ENCODE measurements at regions of chr7 and their contacts with region 1.

Region 1: GRCh38 chr7:32670110-32671025 is 175.1 kb downstream of the AVL9 start:
- DNase-seq: peak; percentile 82
- H3K4me3 Mint-ChIP-seq: peak overlapping the region; percentile 52
- H3K27ac Mint-ChIP-seq: peak overlapping the region; percentile 99
- H3K4me1 Mint-ChIP-seq: peaks cover 74% of the 10 kb centered on the region
- H3K27me3 Mint-ChIP-seq: no peaks in the 10 kb centered on the region
- CTCF ChIP-seq: no peak

Region 2: DNA sequence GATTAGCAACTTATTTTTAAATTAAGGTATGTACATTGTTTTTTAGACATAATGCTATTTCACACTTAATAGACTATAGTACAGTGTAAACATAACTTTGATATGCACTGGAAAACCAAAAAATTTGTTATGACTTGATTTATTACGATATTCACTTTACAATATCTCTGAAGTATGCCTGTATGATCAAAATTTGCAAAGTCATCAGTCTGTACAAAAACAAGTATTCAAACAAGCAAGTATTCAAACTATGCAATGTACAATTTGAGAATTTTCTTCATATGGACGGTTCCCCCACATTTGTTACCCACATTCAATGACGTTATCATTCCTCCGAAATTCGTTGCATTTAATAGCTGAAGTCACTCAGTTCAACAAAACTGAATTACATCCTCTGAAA is 27.2 kb before region 1 on chr7:
- CTCF ChIA-PET with region 1: no interaction called
- intact Hi-C with region 1: no loop called
- DNase-seq: no peak
- H3K4me3 Mint-ChIP-seq: no peak overlapping the region
- H3K27ac Mint-ChIP-seq: no peak overlapping the region
- H3K4me1 Mint-ChIP-seq: peaks cover 7% of the 10 kb centered on the region
- H3K27me3 Mint-ChIP-seq: no peaks in the 10 kb centered on the region
- CTCF ChIP-seq: no peak

Region 3: GRCh38 chr7:32658034-32658944 is 12.1 kb before region 1 on chr7:
- CTCF ChIA-PET with region 1: interaction called, 15 read pairs
- intact Hi-C with region 1: loop called (anchors 1 kb)
- DNase-seq: peak; percentile 78
- H3K4me3 Mint-ChIP-seq: peak overlapping the region; percentile 47
- H3K27ac Mint-ChIP-seq: peak overlapping the region; percentile 94
- H3K4me1 Mint-ChIP-seq: peaks cover 68% of the 10 kb centered on the region
- H3K27me3 Mint-ChIP-seq: no peaks in the 10 kb centered on the region
- CTCF ChIP-seq: no peak

Region 4: GRCh38 chr7:32680259-32681173 is 10.1 kb after region 1 on chr7:
- CTCF ChIA-PET with region 1: interaction called, 5 read pairs
- intact Hi-C with region 1: loop called (anchors 1 kb)
- DNase-seq: peak; percentile 95
- H3K4me3 Mint-ChIP-seq: peak overlapping the region; percentile 26
- H3K27ac Mint-ChIP-seq: peak overlapping the region; percentile 96
- H3K4me1 Mint-ChIP-seq: peaks cover 53% of the 10 kb centered on the region
- H3K27me3 Mint-ChIP-seq: no peaks in the 10 kb centered on the region
- CTCF ChIP-seq: no peak

Region 5: DNA sequence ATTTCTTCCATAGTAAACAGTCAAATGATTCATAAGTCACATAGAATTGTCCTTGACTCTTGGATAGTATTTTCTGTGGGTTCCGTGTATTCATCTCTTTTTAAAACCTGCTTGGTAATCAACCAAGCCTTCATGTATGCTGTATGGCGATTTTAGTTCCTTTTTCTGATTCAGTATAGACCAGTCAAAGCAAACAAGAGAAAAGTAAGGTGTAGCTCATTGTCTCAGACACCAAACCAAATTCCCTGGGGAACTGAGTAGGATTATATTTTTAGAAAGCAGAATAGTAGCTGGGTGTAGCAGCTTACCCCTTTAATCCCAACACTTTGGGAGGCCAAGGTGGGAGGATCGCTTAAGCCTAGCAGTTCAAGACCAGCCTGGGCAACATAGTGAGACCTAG is 699.5 kb after region 1 on chr7:
- CTCF ChIA-PET with region 1: no interaction called
- intact Hi-C with region 1: no loop called
- DNase-seq: no peak
- H3K4me3 Mint-ChIP-seq: no peak overlapping the region
- H3K27ac Mint-ChIP-seq: no peak overlapping the region
- H3K4me1 Mint-ChIP-seq: no peaks in the 10 kb centered on the region
- H3K27me3 Mint-ChIP-seq: no peaks in the 10 kb centered on the region
- CTCF ChIP-seq: no peak